ENCODE measurements at regions of chr5 and their contacts with region 1.

Region 1: DNA sequence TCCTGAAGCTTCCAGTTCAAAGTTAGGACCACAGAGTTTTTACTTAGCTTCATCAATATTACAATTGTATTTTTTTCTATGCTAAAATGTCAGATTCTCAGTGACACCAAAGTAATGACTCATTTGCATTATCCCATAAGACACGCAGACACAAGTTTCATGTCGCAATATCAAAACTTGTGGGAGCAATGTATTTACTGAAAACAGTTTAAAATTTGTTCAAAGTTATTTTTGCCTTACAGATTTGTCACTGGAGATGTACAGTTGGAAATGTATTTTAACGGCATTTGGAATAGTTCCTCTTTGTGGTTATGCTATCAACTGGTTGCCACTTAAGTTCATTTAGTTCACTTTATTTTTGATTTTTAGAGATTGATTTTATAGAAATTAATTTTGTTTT is 36.2 kb upstream of the DAP start:
- DNase-seq: no peak
- H3K4me3 ChIP-seq: no peak overlapping the region
- H3K27ac ChIP-seq: no peak overlapping the region
- H3K4me1 ChIP-seq: no peaks in the 10 kb centered on the region
- H3K27me3 ChIP-seq: no peaks in the 10 kb centered on the region
- CTCF ChIP-seq: no peak
- POLR2A ChIP-seq: no peak

Region 2: DNA sequence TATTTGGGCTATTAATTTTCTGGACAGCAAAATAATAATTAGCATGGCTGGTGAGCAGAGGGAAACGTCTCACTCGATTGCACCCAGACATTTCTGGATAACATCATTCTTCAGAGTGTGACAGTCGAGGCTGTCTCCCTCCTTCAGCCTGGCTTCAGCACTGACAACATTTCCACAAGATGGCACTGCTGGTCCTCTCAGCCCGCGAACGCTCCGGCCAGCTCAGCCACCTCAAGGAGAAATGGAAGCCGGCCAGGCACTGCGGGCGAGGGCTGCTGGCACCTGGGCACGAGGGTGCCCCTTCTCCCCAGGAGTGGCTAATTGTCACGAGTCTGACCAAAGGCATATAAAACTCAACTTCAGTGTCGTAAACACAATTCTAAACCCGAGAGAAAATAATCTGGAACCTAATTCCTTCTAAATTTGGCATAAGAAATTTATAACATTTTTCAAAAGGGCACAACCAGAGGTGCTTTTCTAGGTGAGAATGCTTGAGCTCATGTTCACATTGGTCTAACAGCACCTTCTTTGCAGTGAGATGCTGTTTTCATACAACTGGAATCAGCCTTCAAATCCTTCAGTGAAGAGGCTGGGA is 102.1 kb before region 1 on chr5:
- intact Hi-C with region 1: loop called (anchors 10 kb)
- DNase-seq: peak; percentile 61 to 68
- H3K4me3 ChIP-seq: no peak overlapping the region
- H3K27ac ChIP-seq: peak overlapping the region in 1 of 2 donors; percentile 11
- H3K4me1 ChIP-seq: no peaks in the 10 kb centered on the region
- H3K27me3 ChIP-seq: no peaks in the 10 kb centered on the region
- CTCF ChIP-seq: peak; percentile 72 to 86 (median 76)
- POLR2A ChIP-seq: no peak

Measured in uterus (tissue), 4 donors.